Tibial artery (tissue), 4 donors: ENCODE measurements at regions of chr17 and their contacts with region 1.

Region 1: DNA sequence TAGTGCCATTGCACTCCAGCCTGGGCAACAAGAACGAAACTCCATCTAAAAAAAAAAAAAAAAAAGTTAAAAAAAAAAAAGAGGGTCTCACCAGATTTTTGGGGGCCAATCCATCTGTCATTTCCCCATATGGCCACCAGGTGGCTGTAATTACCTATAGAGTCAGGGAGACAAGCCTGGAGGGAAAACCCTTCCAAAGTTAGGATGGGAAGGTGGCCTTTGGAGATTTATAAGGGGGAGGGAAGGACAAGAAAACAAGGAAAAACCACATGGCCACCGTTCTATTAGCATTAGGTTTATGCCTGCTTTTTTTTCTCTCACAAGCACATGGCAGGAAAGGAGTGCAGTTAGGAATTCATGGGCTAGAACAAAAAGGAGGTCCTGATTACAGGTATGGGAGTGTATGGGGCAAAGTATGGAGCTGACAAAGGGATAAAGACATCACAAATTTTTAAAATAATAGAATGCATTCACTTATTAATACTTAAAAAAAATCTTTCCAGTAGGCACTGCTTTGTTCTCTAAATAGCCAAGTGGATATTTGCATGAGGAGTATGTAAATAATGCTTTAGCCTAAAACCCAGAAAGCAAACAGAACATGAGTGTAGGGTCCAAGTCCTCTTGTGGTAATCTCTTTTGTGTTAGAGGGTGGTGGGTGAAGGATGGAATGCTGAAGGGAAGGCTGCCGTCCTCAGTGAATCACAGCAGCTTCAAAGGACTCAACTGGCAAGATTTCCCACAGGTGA is 5.1 kb downstream of the CYB5D1 start:
- DNase-seq: no peak
- H3K4me3 ChIP-seq: no peak overlapping the region
- H3K27ac ChIP-seq: no peak overlapping the region
- H3K4me1 ChIP-seq: peaks cover 0 to 16% (median 12%) of the 10 kb centered on the region in 4 donors
- H3K27me3 ChIP-seq: no peaks in the 10 kb centered on the region
- CTCF ChIP-seq: peak; percentile 69 to 86

Region 2: DNA sequence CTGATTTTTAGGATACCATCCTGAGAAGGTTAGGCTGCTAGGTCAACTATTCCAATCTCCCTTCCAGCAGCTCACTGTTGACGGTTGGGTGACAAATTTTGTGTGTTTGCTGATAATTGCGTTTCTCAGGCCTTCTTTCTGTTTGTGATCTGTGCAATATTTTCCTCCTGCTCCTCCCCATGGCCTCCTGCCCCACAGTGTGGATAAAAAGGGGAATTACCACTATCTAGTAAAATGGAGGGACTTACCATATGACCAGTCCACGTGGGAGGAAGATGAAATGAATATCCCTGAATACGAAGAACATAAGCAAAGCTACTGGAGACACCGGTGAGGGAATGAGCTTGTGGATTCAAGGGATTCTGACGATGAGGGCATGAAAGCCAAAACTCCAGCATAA is 34.9 kb after region 1 on chr17:
- intact Hi-C with region 1: loop called (anchors 5 kb)
- DNase-seq: no peak
- H3K4me3 ChIP-seq: no peak overlapping the region
- H3K27ac ChIP-seq: no peak overlapping the region
- H3K4me1 ChIP-seq: no peaks in the 10 kb centered on the region
- H3K27me3 ChIP-seq: no peaks in the 10 kb centered on the region
- CTCF ChIP-seq: peak; percentile 34 to 55